ENCODE measurements at regions of chr6 and their contacts with region 1.

Region 1: GRCh38 chr6:149431905-149432775 is 32.1 kb downstream of the SUMO4 start:
- DNase-seq: peak; percentile 79 to 80
- ATAC-seq: peak; percentile 96 to 98
- H3K4me3 ChIP-seq: no peak overlapping the region
- H3K27ac ChIP-seq: peak overlapping the region; percentile 48 to 69
- H3K4me1 ChIP-seq: 0 out of 3 replicates have a peak, but pooled peaks cover 3% of the 10 kb centered on the region
- CTCF ChIP-seq: peak; percentile 84
- EP300 ChIP-seq: no peak
- POLR2A ChIP-seq: no peak
- RAD21 ChIP-seq: peak; percentile 96 to 97

Region 2: GRCh38 chr6:149028767-149029405 is 403.3 kb before region 1 on chr6:
- CTCF ChIA-PET with region 1: interaction called, 118 read pairs
- POLR2A ChIA-PET with region 1: interaction called, 3 read pairs
- DNase-seq: peak; percentile 32 to 88
- ATAC-seq: no peak
- H3K4me3 ChIP-seq: no peak overlapping the region
- H3K27ac ChIP-seq: peak overlapping the region in 1 of 2 experiments; percentile 62; a peak in 2 of 6 replicates
- H3K4me1 ChIP-seq: peaks cover 35% of the 10 kb centered on the region
- CTCF ChIP-seq: peak; percentile 77
- EP300 ChIP-seq: no peak
- POLR2A ChIP-seq: no peak
- RAD21 ChIP-seq: peak; percentile 90 to 91

Region 3: DNA sequence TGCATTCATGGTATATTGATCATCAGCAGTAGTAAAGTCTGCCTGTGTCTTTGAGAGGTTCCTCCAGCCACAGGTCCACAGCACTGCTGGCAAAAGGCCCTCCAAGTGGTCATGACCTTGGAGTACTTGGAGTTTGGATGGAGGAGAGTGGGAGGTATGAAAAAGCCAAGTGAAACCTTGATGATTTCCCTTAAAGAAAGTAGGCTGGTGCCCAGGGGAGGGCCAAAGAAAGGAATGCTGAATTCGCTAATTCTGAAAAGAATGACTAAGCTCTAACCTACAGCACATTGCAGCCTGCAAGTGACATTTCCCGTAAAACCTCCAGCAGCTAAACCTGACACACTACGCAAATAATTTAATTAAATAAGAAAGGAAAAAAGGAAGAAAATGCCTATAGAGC is 338.0 kb before region 1 on chr6:
- CTCF ChIA-PET with region 1: interaction called, 10 read pairs
- POLR2A ChIA-PET with region 1: no interaction called
- DNase-seq: no peak
- ATAC-seq: no peak
- H3K4me3 ChIP-seq: no peak overlapping the region
- H3K27ac ChIP-seq: peak overlapping the region in 1 of 2 experiments; percentile 26; a peak in 1 of 6 replicates
- H3K4me1 ChIP-seq: peaks cover 10% of the 10 kb centered on the region; the same call in 2 of the 3 replicates
- CTCF ChIP-seq: no peak
- EP300 ChIP-seq: no peak
- POLR2A ChIP-seq: no peak
- RAD21 ChIP-seq: no peak

Region 4: DNA sequence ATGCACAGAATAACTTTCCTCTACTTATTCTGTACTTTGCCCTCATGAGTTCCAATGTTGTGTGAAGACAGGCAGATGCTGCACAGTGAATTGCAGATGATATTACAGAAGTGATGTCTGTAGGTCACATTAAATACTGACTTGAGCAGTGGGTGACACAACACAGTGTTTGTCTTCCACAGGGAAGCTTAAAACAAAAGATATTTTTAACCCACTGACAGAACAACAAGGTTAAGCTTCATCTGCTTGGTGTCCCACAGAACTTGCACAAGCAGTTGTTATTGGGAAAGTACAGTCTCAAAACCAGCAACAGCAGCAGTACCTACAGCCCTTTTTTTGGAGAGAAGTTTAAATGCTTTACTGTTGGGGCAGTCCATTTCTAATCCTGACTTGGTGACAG is 21.6 kb before region 1 on chr6:
- CTCF ChIA-PET with region 1: interaction called, 10 read pairs
- POLR2A ChIA-PET with region 1: no interaction called
- DNase-seq: no peak
- ATAC-seq: no peak
- H3K4me3 ChIP-seq: no peak overlapping the region
- H3K27ac ChIP-seq: no peak overlapping the region
- H3K4me1 ChIP-seq: peaks cover 8% of the 10 kb centered on the region; the same call in 2 of the 3 replicates
- CTCF ChIP-seq: no peak
- EP300 ChIP-seq: no peak
- POLR2A ChIP-seq: no peak
- RAD21 ChIP-seq: no peak

Region 5: DNA sequence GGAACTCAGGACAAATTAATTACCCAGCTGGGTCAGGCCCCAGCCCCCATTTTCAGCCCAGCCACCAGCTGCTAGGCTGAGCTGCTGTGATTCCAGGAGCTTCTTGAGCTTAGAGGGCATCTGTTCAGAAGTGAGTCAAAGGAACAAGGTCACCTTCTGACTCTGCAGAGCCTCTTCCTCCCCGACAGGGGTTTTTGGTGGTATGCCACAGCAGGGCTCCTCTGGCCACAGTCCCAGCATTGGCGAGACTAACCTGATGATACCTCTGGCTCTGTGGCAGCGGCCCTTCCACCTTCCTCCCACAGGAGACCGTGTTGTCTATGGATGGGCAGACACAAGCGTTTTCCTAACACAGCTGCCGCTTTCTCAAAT is 12.9 kb after region 1 on chr6:
- CTCF ChIA-PET with region 1: interaction called, 23 read pairs
- POLR2A ChIA-PET with region 1: no interaction called
- DNase-seq: no peak
- ATAC-seq: no peak
- H3K4me3 ChIP-seq: no peak overlapping the region
- H3K27ac ChIP-seq: no peak overlapping the region
- H3K4me1 ChIP-seq: no peaks in the 10 kb centered on the region
- CTCF ChIP-seq: no peak
- EP300 ChIP-seq: no peak
- POLR2A ChIP-seq: no peak
- RAD21 ChIP-seq: no peak